ENCODE measurements at regions of chr15 and their contacts with region 1.

Region 1: GRCh38 chr15:71386448-71387236 is 271.4 kb downstream of the THSD4 start:
- DNase-seq: no peak
- ATAC-seq: peak; percentile 90
- H3K4me3 Mint-ChIP-seq: peak overlapping the region; percentile 49
- H3K27ac Mint-ChIP-seq: peak overlapping the region; percentile 99
- H3K4me1 Mint-ChIP-seq: peaks cover 72% of the 10 kb centered on the region
- H3K27me3 Mint-ChIP-seq: peaks cover 9% of the 10 kb centered on the region; the same call in 1 of the 2 replicates
- CTCF ChIP-seq: no peak

Region 2: GRCh38 chr15:71256934-71257664 is 129.5 kb before region 1 on chr15:
- CTCF ChIA-PET with region 1: no interaction called
- POLR2A ChIA-PET with region 1: interaction called, 10 read pairs
- DNase-seq: no peak
- ATAC-seq: peak; percentile 56; the same call in 1 of the 2 replicates
- H3K4me3 Mint-ChIP-seq: no peak overlapping the region
- H3K27ac Mint-ChIP-seq: no peak overlapping the region
- H3K4me1 Mint-ChIP-seq: peaks cover 7% of the 10 kb centered on the region
- H3K27me3 Mint-ChIP-seq: no peaks in the 10 kb centered on the region
- CTCF ChIP-seq: no peak

Region 3: GRCh38 chr15:71431345-71432336 is 45.0 kb after region 1 on chr15:
- CTCF ChIA-PET with region 1: interaction called, 14 read pairs
- POLR2A ChIA-PET with region 1: no interaction called
- DNase-seq: no peak
- ATAC-seq: no peak
- H3K4me3 Mint-ChIP-seq: no peak overlapping the region
- H3K27ac Mint-ChIP-seq: no peak overlapping the region
- H3K4me1 Mint-ChIP-seq: peaks cover 27% of the 10 kb centered on the region
- H3K27me3 Mint-ChIP-seq: no peaks in the 10 kb centered on the region
- CTCF ChIP-seq: no peak

Region 4: DNA sequence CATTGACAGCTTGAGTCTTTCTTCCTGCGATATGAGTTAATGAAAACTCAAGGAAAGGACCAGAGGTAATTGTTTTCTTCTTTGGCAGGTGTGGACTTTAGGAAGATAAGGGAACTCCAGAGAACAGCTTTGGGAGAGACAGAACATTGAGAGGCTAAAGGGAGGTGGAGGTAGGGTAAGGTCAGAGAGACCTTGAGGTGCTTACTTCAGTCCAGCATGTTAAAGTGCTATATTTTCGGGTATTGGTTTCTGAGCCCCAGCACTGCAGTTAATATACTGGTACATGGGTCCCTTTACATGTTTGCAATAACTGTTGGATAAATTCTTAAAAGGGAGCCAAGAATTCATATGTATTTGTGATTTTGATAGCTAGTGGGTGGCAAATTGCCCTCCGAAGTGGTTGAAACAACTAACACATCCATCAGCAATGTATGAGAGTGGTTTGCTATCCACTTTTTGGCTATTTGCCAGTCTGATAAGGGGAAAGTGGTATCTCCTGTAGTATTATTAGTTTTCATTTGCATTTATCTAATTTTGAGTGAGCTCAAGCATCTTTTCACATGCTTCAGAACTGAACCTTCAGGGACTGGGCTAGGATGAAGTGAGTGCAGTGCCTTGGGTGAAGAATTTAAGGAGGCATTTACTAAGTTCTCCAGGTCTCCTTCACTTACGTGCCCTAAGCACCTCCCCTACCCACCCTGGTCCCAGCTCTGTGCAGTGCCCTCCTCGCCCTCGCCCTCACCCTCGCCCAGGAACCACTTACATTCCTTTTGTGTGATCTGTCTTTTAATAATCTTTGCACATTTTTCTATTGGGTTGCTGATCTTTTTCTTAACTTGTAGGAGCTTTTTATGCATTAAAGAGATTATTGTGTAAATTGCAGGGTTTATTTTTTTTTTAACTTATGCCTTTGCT is 51.0 kb after region 1 on chr15:
- CTCF ChIA-PET with region 1: interaction called, 42 read pairs
- POLR2A ChIA-PET with region 1: interaction called, 3 read pairs
- DNase-seq: no peak
- ATAC-seq: no peak
- H3K4me3 Mint-ChIP-seq: no peak overlapping the region
- H3K27ac Mint-ChIP-seq: no peak overlapping the region
- H3K4me1 Mint-ChIP-seq: peaks cover 6% of the 10 kb centered on the region
- H3K27me3 Mint-ChIP-seq: peaks cover 3% of the 10 kb centered on the region; the same call in 1 of the 2 replicates
- CTCF ChIP-seq: no peak

Region 5: GRCh38 chr15:71443538-71443937 is 56.9 kb after region 1 on chr15:
- CTCF ChIA-PET with region 1: interaction called, 42 read pairs
- POLR2A ChIA-PET with region 1: interaction called, 3 read pairs
- DNase-seq: peak; percentile 72
- ATAC-seq: peak; percentile 39; the same call in 1 of the 2 replicates
- H3K4me3 Mint-ChIP-seq: no peak overlapping the region
- H3K27ac Mint-ChIP-seq: peak overlapping the region; percentile 18; the same call in 1 of the 2 replicates
- H3K4me1 Mint-ChIP-seq: peaks cover 19% of the 10 kb centered on the region
- H3K27me3 Mint-ChIP-seq: no peaks in the 10 kb centered on the region
- CTCF ChIP-seq: peak; percentile 80